HepG2 (cell line): ENCODE measurements at regions of chr19 and their contacts with region 1.

Region 1: DNA sequence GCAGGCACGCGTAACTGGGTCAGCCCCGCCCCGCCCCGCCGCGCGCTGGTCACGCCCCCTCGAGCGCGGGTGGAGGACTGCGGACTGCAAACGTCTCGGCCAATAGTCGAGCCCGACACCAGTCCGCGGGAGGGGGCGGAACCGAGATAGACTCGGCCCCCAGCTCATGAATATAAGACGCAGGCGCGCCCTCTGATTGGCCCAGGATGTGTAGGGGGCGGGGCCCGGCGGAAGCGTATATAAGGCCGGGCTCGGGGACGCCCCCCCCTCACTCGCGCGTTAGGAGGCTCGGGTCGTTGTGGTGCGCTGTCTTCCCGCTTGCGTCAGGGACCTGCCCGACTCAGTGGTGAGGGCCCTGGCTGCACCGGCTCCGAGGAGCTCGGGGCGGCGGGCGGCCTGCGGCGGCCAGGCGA is at the start of gene CIRBP:
- DNase-seq: peak; percentile 96
- ATAC-seq: peak; percentile 45
- H3K4me3 ChIP-seq: peak within 1 kb of the TSS; percentile 59 to 83 (median 62)
- H3K27ac ChIP-seq: peak within 1 kb of the TSS; percentile 85
- H3K4me1 ChIP-seq: peaks cover 78% of the 10 kb centered on the region
- H3K27me3 ChIP-seq: no peaks in the 10 kb centered on the region
- CTCF ChIP-seq: no peak
- EP300 ChIP-seq: no peak
- POLR2A ChIP-seq: peak in 1 of 2 experiments; percentile 96; a peak in 2 of 4 replicates
- RAD21 ChIP-seq: no peak
- total RNA-seq, gene CIRBP: 133 and 135 TPM in 2 replicates

Region 2: GRCh38 chr19:1103708-1104310 is 165.3 kb before region 1 on chr19 and contains the start of gene GPX4:
- CTCF ChIA-PET with region 1: no interaction called
- POLR2A ChIA-PET with region 1: interaction called, 20 read pairs
- in situ Hi-C with region 1: no loop called
- intact Hi-C with region 1: no loop called
- DNase-seq: peak; percentile 96
- ATAC-seq: peak; percentile 85
- H3K4me3 ChIP-seq: peak within 1 kb of the TSS; percentile 89 to 92 (median 89)
- H3K27ac ChIP-seq: peak within 1 kb of the TSS; percentile 100
- H3K4me1 ChIP-seq: peaks cover 75% of the 10 kb centered on the region
- H3K27me3 ChIP-seq: no peaks in the 10 kb centered on the region
- CTCF ChIP-seq: no peak; the same call in 1 of the 2 replicates
- EP300 ChIP-seq: no peak
- POLR2A ChIP-seq: peak; percentile 95
- RAD21 ChIP-seq: peak; percentile 86
- total RNA-seq, gene GPX4: 426 and 535 TPM in 2 replicates

Region 3: GRCh38 chr19:1285737-1286360 is 16.8 kb after region 1 on chr19 and contains the start of gene EFNA2:
- CTCF ChIA-PET with region 1: no interaction called
- POLR2A ChIA-PET with region 1: interaction called, 61 read pairs
- in situ Hi-C with region 1: no loop called
- intact Hi-C with region 1: no loop called
- DNase-seq: no peak
- ATAC-seq: no peak
- H3K4me3 ChIP-seq: peak within 1 kb of the TSS; percentile 75 to 89 (median 82)
- H3K27ac ChIP-seq: peak within 1 kb of the TSS; percentile 75
- H3K4me1 ChIP-seq: peaks cover 67% of the 10 kb centered on the region
- H3K27me3 ChIP-seq: no peaks in the 10 kb centered on the region; a peak in 1 of 5 replicates
- CTCF ChIP-seq: no peak
- EP300 ChIP-seq: no peak
- POLR2A ChIP-seq: no peak
- RAD21 ChIP-seq: no peak
- total RNA-seq, gene EFNA2: 4.3 and 9.9 TPM in 2 replicates

Region 4: DNA sequence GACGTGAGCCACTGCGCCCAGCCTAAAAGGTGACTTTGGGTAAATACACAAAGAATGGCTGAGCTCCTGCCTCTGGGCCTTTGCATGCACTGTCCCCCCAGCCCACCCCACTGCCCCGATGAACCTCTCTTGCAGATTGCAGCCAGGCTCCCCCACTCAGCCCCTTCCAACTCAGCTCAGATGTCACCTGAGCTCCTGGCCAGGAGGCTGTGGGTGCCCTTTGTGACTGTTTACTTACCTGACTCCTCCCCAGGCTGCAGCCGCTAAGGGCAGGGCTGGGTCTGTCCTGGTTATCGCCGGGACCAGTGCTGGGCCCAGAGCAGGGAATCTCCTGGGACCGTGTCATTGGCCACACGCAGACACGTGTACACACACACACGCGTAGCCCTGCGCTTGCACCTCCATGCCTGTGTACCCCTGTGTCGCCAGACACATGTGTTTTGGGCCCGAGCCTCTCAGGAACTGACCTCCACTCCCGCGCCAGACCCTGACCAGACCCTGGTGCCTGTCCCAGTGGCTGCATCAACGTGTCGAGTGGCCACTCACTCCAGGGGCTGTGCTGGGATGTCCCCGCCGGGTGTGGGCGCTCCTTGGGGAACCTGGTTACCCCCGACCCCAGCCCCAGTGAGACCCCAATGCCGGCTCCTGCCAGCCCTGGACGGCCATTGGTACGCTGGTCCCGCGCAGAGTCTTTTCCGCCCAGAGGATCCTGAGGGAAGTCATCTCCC is 35.3 kb after region 1 on chr19:
- CTCF ChIA-PET with region 1: no interaction called
- POLR2A ChIA-PET with region 1: interaction called, 14 read pairs
- in situ Hi-C with region 1: no loop called
- intact Hi-C with region 1: no loop called
- DNase-seq: peak; percentile 81
- ATAC-seq: peak; percentile 96
- H3K4me3 ChIP-seq: peak overlapping the region; percentile 24 to 74 (median 42); a peak in 5 of 6 replicates
- H3K27ac ChIP-seq: peak overlapping the region; percentile 39
- H3K4me1 ChIP-seq: peaks cover 38% of the 10 kb centered on the region
- H3K27me3 ChIP-seq: no peaks in the 10 kb centered on the region
- CTCF ChIP-seq: 0 out of 2 replicates have a peak, but pooled peaks have one; percentile 9
- EP300 ChIP-seq: peak in 1 of 2 experiments; percentile 26; a peak in 1 of 4 replicates
- POLR2A ChIP-seq: peak; percentile 49 to 65; a peak in 3 of 4 replicates
- RAD21 ChIP-seq: no peak

Region 5: DNA sequence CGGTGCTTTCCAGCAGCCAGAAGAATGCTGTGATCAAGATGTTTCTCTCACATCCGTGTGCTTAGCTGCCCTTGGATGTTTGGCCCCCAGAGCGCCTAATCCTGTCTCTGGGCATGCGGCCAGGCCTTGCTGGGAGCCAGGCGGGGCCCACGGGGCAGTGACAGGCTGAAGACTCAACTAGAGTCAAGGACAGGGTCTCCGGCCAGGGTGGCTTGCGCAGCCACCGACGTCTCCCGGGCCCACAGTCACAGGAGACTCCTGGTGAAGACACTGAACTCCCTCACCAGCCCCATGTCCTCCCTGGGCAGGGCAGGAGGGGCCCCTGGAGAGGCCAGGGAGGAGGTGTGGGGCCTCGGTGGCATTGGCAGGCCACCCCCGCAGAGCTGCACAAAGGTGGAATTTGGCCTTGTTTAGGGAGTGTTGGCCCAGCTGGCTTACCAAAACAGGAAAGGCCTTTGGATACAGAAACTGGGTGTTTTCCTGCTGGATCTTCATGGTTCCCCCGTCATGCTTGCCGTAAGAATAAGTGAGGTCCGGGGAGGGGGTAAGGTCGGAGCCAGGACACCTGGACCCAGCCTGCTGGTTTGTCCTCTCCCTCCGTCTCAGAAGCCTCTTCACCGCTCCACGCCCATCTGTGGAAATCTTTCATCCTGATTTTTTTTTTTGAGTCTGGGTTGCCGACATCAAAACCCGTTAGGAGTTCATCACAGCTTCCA is 104.6 kb after region 1 on chr19:
- CTCF ChIA-PET with region 1: no interaction called
- POLR2A ChIA-PET with region 1: interaction called, 22 read pairs
- in situ Hi-C with region 1: no loop called
- intact Hi-C with region 1: no loop called
- DNase-seq: peak; percentile 90
- ATAC-seq: peak; percentile 80
- H3K4me3 ChIP-seq: peak overlapping the region; percentile 30 to 65 (median 32); a peak in 5 of 6 replicates
- H3K27ac ChIP-seq: peak overlapping the region; percentile 91
- H3K4me1 ChIP-seq: peaks cover 47% of the 10 kb centered on the region
- H3K27me3 ChIP-seq: no peaks in the 10 kb centered on the region
- CTCF ChIP-seq: peak; percentile 25; the same call in 1 of the 2 replicates
- EP300 ChIP-seq: peak in 1 of 2 experiments; percentile 40; a peak in 2 of 4 replicates
- POLR2A ChIP-seq: peak in 1 of 2 experiments; percentile 17; a peak in 1 of 4 replicates
- RAD21 ChIP-seq: peak; percentile 39; the same call in 1 of the 2 replicates

Region 6: GRCh38 chr19:1402411-1403070 is 133.5 kb after region 1 on chr19:
- CTCF ChIA-PET with region 1: no interaction called
- POLR2A ChIA-PET with region 1: interaction called, 16 read pairs
- in situ Hi-C with region 1: no loop called
- intact Hi-C with region 1: no loop called
- DNase-seq: no peak
- ATAC-seq: no peak
- H3K4me3 ChIP-seq: peak overlapping the region; percentile 46 to 91 (median 78)
- H3K27ac ChIP-seq: no peak overlapping the region
- H3K4me1 ChIP-seq: peaks cover 52% of the 10 kb centered on the region
- H3K27me3 ChIP-seq: no peaks in the 10 kb centered on the region; a peak in 1 of 5 replicates
- CTCF ChIP-seq: peak; percentile 10
- EP300 ChIP-seq: no peak
- POLR2A ChIP-seq: no peak
- RAD21 ChIP-seq: no peak

Region 7: GRCh38 chr19:1490311-1491113 is 221.4 kb after region 1 on chr19 and contains the start of gene PCSK4:
- CTCF ChIA-PET with region 1: no interaction called
- POLR2A ChIA-PET with region 1: interaction called, 10 read pairs
- in situ Hi-C with region 1: no loop called
- intact Hi-C with region 1: no loop called
- DNase-seq: peak; percentile 95
- ATAC-seq: peak; percentile 83
- H3K4me3 ChIP-seq: peak within 1 kb of the TSS; percentile 72 to 85 (median 77)
- H3K27ac ChIP-seq: peak within 1 kb of the TSS; percentile 68
- H3K4me1 ChIP-seq: peaks cover 46% of the 10 kb centered on the region
- H3K27me3 ChIP-seq: no peaks in the 10 kb centered on the region
- CTCF ChIP-seq: no peak
- EP300 ChIP-seq: no peak
- POLR2A ChIP-seq: no peak
- RAD21 ChIP-seq: peak; percentile 36; the same call in 1 of the 2 replicates
- total RNA-seq, gene PCSK4: 0.52 and 2.0 TPM in 2 replicates

Region 8: DNA sequence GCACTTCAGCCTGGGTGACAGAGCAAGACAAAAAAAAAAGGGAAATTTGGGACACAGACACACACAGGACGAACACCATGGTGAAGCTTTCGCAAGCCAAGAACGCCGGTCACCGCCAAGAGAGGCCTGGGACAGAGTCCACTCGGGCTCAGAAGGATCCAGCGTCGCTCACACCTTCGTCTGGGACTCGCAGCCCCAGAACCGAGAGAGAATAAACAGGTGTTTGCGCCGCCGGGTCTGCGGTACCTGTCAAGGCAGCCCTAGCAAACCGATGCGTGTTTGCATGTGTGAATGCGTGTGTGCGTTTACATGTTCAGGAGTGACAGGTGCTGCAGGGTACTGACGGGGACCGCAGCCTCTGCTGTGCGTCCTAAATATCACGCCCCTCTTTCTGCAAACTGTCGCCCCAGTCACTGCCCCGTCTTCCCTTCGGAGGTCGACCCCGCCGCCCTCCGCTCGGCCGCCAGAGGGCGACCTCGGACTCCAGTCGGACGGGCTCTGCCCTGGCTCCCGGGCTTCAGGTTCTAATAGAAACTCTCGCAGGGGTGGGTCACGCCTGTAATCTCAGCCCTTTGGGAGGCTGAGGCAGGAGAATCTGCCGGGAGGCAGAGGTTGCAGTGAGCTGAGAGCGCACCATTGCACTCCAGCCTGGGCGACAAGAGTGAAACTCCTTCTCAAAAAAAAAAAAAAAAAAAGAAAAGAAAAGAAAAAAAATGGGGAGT is 660.1 kb after region 1 on chr19:
- CTCF ChIA-PET with region 1: no interaction called
- POLR2A ChIA-PET with region 1: no interaction called
- in situ Hi-C with region 1: no loop called
- intact Hi-C with region 1: no loop called
- DNase-seq: peak; percentile 65
- ATAC-seq: peak; percentile 89
- H3K4me3 ChIP-seq: peak overlapping the region; percentile 48 to 71 (median 49)
- H3K27ac ChIP-seq: no peak overlapping the region
- H3K4me1 ChIP-seq: peaks cover 7% of the 10 kb centered on the region
- H3K27me3 ChIP-seq: no peaks in the 10 kb centered on the region
- CTCF ChIP-seq: peak; percentile 93
- EP300 ChIP-seq: no peak
- POLR2A ChIP-seq: no peak
- RAD21 ChIP-seq: peak; percentile 80